ENCODE measurements at regions of chr3 and their contacts with region 1.

Region 1: GRCh38 chr3:125334675-125335560 is 40.2 kb downstream of the ZNF148 start:
- DNase-seq: peak; percentile 61
- H3K4me3 ChIP-seq: peak overlapping the region in 1 of 3 experiments; percentile 30
- H3K27ac ChIP-seq: peak overlapping the region; percentile 36
- H3K4me1 ChIP-seq: peaks cover 42% of the 10 kb centered on the region
- H3K27me3 ChIP-seq: no peaks in the 10 kb centered on the region
- CTCF ChIP-seq: no peak
- POLR2A ChIP-seq: no peak

Region 2: DNA sequence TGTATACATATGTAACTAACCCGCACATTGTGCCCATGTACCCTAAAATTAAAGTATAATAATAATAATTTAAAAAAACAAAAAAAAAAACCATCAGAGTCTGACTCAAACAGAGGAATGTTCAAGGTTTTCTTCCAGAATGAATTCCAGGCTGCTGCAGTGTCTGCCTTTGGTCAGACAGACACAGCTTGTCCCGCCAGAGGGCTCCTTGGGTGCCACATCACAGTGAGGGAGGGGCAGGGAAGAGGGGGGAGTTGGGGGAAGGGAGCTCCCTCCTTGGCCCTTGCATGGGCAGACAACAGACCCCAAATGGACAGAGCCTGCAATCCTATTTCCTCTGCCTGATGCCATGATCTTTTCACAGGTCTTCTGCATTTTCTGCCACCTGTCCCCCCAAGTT is 484.3 kb before region 1 on chr3:
- CTCF ChIA-PET with region 1: no interaction called
- POLR2A ChIA-PET with region 1: no interaction called
- dilution Hi-C with region 1: no loop called
- intact Hi-C with region 1: no loop called
- DNase-seq: no peak
- H3K4me3 ChIP-seq: no peak overlapping the region
- H3K27ac ChIP-seq: no peak overlapping the region
- H3K4me1 ChIP-seq: peaks cover 4% of the 10 kb centered on the region
- H3K27me3 ChIP-seq: no peaks in the 10 kb centered on the region
- CTCF ChIP-seq: no peak
- POLR2A ChIP-seq: no peak

Region 3: GRCh38 chr3:125324341-125324740 is 10.6 kb before region 1 on chr3:
- CTCF ChIA-PET with region 1: interaction called, 3 read pairs
- POLR2A ChIA-PET with region 1: no interaction called
- dilution Hi-C with region 1: no loop called
- intact Hi-C with region 1: loop called (anchors 1 kb)
- DNase-seq: peak; percentile 71
- H3K4me3 ChIP-seq: no peak overlapping the region
- H3K27ac ChIP-seq: peak overlapping the region; percentile 3
- H3K4me1 ChIP-seq: peaks cover 35% of the 10 kb centered on the region
- H3K27me3 ChIP-seq: no peaks in the 10 kb centered on the region
- CTCF ChIP-seq: no peak
- POLR2A ChIP-seq: no peak

Region 4: DNA sequence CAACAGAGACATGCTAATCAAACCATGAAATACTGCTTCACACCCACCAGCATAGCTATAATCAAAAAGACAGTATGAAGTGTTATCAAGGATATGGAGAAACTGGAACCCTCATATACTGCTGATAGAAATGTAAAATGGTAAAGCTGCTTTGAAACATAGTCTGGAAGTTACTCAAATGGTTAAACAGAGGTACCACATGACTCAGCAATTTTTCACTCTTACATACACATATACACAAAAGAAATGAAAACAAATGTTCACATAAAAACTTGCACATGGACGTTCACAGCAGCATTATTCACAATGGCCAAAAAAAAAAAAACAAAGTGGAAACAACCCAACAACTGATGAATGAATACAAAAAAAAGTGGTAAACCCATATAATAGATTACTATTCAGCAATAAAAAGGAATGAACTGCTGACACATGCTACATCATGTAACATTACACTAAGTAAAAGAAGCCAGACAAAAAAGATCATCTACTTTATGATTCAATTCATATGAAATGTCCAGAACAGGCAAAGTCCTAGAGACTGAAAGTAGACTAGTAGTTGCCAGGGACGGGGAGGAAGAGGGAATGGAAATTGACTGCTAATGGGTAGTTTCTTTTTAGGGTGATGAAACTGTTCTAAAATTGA is 17.0 kb after region 1 on chr3:
- CTCF ChIA-PET with region 1: interaction called, 3 read pairs
- POLR2A ChIA-PET with region 1: no interaction called
- dilution Hi-C with region 1: no loop called
- intact Hi-C with region 1: loop called (anchors 2 kb)
- DNase-seq: peak; percentile 33
- H3K4me3 ChIP-seq: no peak overlapping the region
- H3K27ac ChIP-seq: peak overlapping the region; percentile 11
- H3K4me1 ChIP-seq: peaks cover 17% of the 10 kb centered on the region
- H3K27me3 ChIP-seq: no peaks in the 10 kb centered on the region
- CTCF ChIP-seq: no peak
- POLR2A ChIP-seq: no peak

Region 5: GRCh38 chr3:125431912-125432790 is 97.2 kb after region 1 on chr3:
- CTCF ChIA-PET with region 1: no interaction called
- POLR2A ChIA-PET with region 1: no interaction called
- dilution Hi-C with region 1: no loop called
- intact Hi-C with region 1: no loop called
- DNase-seq: no peak
- H3K4me3 ChIP-seq: no peak overlapping the region
- H3K27ac ChIP-seq: no peak overlapping the region
- H3K4me1 ChIP-seq: no peaks in the 10 kb centered on the region
- H3K27me3 ChIP-seq: no peaks in the 10 kb centered on the region
- CTCF ChIP-seq: no peak
- POLR2A ChIP-seq: no peak

Measured in endothelial cell of umbilical vein (primary cell).